Gastrocnemius medialis (tissue), 4 donors: ENCODE measurements at regions of chr17 and their contacts with region 1.

Region 1: GRCh38 chr17:60356940-60357339 is 35.0 kb downstream of the USP32 start:
- DNase-seq: no peak
- ATAC-seq: no peak
- H3K4me3 ChIP-seq: no peak overlapping the region
- H3K27ac ChIP-seq: peak overlapping the region in 2 of 4 donors; percentile 28 to 38
- H3K4me1 ChIP-seq: peaks cover 36 to 41% of the 10 kb centered on the region in 2 donors
- H3K27me3 ChIP-seq: no peaks in the 10 kb centered on the region
- CTCF ChIP-seq: no peak
- POLR2A ChIP-seq: no peak

Region 2: GRCh38 chr17:60315650-60316049 is 41.3 kb before region 1 on chr17:
- in situ Hi-C with region 1: no loop called
- intact Hi-C with region 1: loop called (anchors 5 kb)
- DNase-seq: no peak
- ATAC-seq: no peak
- H3K4me3 ChIP-seq: no peak overlapping the region
- H3K27ac ChIP-seq: no peak overlapping the region
- H3K4me1 ChIP-seq: peaks cover 14 to 21% of the 10 kb centered on the region in 2 donors
- H3K27me3 ChIP-seq: no peaks in the 10 kb centered on the region
- CTCF ChIP-seq: no peak
- POLR2A ChIP-seq: no peak